ENCODE measurements at regions of chr12 and their contacts with region 1.

Region 1: GRCh38 chr12:94459728-94460615 is at the start of gene CEP83:
- DNase-seq: peak; percentile 94
- ATAC-seq: peak; percentile 96
- H3K4me3 Mint-ChIP-seq: peak within 1 kb of the TSS; percentile 91
- H3K27ac Mint-ChIP-seq: peak within 1 kb of the TSS; percentile 88
- H3K4me1 Mint-ChIP-seq: peaks cover 23% of the 10 kb centered on the region
- H3K27me3 Mint-ChIP-seq: no peaks in the 10 kb centered on the region
- CTCF ChIP-seq: no peak
- total RNA-seq, gene CEP83: 25.0 and 36.9 TPM in 2 replicates

Region 2: GRCh38 chr12:93938931-93939330 is 521.0 kb before region 1 on chr12:
- CTCF ChIA-PET with region 1: no interaction called
- POLR2A ChIA-PET with region 1: no interaction called
- intact Hi-C with region 1: no loop called
- DNase-seq: no peak
- ATAC-seq: no peak
- H3K4me3 Mint-ChIP-seq: no peak overlapping the region
- H3K27ac Mint-ChIP-seq: no peak overlapping the region
- H3K4me1 Mint-ChIP-seq: no peaks in the 10 kb centered on the region
- H3K27me3 Mint-ChIP-seq: peaks cover 3% of the 10 kb centered on the region
- CTCF ChIP-seq: no peak

Region 3: GRCh38 chr12:94488463-94488862 is 28.5 kb after region 1 on chr12:
- CTCF ChIA-PET with region 1: no interaction called
- POLR2A ChIA-PET with region 1: no interaction called
- intact Hi-C with region 1: loop called (anchors 2 kb)
- DNase-seq: no peak
- ATAC-seq: peak; percentile 83
- H3K4me3 Mint-ChIP-seq: peak overlapping the region; percentile 12
- H3K27ac Mint-ChIP-seq: peak overlapping the region; percentile 71
- H3K4me1 Mint-ChIP-seq: peaks cover 15% of the 10 kb centered on the region
- H3K27me3 Mint-ChIP-seq: no peaks in the 10 kb centered on the region
- CTCF ChIP-seq: no peak

Region 4: GRCh38 chr12:94817695-94818075 is 357.7 kb after region 1 on chr12:
- CTCF ChIA-PET with region 1: no interaction called
- POLR2A ChIA-PET with region 1: no interaction called
- intact Hi-C with region 1: loop called (anchors 1 kb)
- DNase-seq: no peak
- ATAC-seq: no peak
- H3K4me3 Mint-ChIP-seq: peak overlapping the region; percentile 87
- H3K27ac Mint-ChIP-seq: peak overlapping the region; percentile 97
- H3K4me1 Mint-ChIP-seq: peaks cover 71% of the 10 kb centered on the region
- H3K27me3 Mint-ChIP-seq: no peaks in the 10 kb centered on the region
- CTCF ChIP-seq: no peak

Measured in activated B cell treated with CpG ODN at 0.5 μM for 24 hours (primary cell).